ENCODE measurements at regions of chr21 and their contacts with region 1.

Region 1: DNA sequence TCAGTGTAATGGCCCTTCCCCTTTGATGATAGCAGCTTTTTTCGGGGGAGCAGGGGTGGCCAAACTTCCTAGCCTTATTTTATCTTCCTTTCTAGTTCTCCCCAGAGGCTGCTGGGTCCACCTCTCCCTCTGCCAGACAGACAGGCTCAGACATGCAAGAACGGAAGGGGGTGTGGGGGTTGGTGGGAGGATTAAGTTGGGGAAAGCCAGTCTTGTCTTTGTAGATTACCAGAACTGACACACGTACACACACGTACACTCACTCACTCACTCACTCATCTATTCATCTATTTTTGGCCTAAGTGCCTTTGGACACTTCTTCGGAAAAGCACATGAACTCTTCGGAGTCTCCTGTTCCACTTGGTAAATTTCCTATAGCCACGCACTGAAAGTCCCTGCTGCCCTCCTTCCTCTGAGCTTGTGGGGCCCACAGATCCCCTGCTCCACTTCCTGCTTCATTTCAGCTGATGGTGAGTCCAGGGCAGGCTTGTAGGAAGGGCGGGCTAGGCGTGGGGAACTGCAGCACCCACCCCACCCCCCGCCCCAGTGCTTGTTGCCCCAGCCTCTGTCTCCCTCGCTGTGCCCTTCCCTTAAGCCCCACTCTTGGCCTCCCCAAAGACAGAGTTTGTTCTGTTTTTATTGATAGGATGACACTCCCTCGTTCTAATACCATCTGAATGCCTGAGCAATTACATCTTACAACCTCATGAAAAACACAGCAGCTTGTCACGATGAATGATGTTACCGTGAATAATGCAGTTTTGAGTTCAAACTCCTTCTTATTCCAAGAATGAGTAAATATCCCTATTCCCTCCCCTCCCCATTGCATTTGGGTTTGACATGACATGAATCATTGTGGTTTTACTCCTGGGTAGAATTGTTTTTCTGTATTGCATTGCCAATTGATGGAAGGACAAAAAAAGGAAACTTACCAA is 60.7 kb upstream of the ATP5PO start:
- DNase-seq: peak; percentile 58
- H3K4me3 Mint-ChIP-seq: peak overlapping the region; percentile 62
- H3K27ac Mint-ChIP-seq: peak overlapping the region; percentile 94
- H3K4me1 Mint-ChIP-seq: peaks cover 81% of the 10 kb centered on the region
- H3K27me3 Mint-ChIP-seq: no peaks in the 10 kb centered on the region

Region 2: GRCh38 chr21:33761441-33762036 is 214.8 kb before region 1 on chr21:
- CTCF ChIA-PET with region 1: no interaction called
- POLR2A ChIA-PET with region 1: no interaction called
- DNase-seq: no peak
- H3K4me3 Mint-ChIP-seq: no peak overlapping the region
- H3K27ac Mint-ChIP-seq: no peak overlapping the region
- H3K4me1 Mint-ChIP-seq: no peaks in the 10 kb centered on the region
- H3K27me3 Mint-ChIP-seq: no peaks in the 10 kb centered on the region

Region 3: DNA sequence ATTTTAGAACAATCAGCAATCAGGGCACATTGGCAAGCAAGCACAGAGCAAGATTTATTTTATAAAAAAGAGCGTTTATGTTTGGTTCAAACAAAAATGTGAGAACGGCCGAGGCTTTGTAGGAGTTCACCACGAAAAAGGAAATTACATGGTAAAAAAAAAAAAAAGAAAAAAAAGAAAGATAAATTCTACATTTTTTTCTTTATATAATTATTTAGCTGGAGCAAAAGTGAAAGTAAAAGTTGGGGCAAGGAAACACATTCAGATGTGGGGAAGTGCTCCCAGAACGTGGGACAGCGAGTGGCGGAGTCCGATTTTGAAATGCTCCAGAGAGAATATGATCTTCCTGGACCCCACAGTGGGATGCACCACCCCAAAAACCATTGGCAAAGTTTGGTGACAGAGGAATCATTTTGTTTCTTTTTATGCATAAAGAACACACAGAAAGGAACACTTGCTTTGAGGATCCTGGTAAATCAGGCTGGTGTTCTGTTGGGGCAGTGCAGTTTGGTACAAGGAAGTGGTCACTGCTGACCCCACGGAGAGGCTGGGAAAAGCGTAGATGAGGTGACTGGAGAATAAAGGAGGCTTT is 44.5 kb before region 1 on chr21:
- CTCF ChIA-PET with region 1: interaction called, 3 read pairs
- POLR2A ChIA-PET with region 1: interaction called, 63 read pairs
- DNase-seq: no peak
- H3K4me3 Mint-ChIP-seq: peak overlapping the region; percentile 94
- H3K27ac Mint-ChIP-seq: peak overlapping the region; percentile 97
- H3K4me1 Mint-ChIP-seq: peaks cover 48% of the 10 kb centered on the region
- H3K27me3 Mint-ChIP-seq: no peaks in the 10 kb centered on the region

Region 4: GRCh38 chr21:33940164-33940880 is 36.0 kb before region 1 on chr21:
- CTCF ChIA-PET with region 1: no interaction called
- POLR2A ChIA-PET with region 1: interaction called, 63 read pairs
- DNase-seq: no peak
- H3K4me3 Mint-ChIP-seq: no peak overlapping the region
- H3K27ac Mint-ChIP-seq: peak overlapping the region; percentile 34
- H3K4me1 Mint-ChIP-seq: peaks cover 66% of the 10 kb centered on the region
- H3K27me3 Mint-ChIP-seq: no peaks in the 10 kb centered on the region

Region 5: DNA sequence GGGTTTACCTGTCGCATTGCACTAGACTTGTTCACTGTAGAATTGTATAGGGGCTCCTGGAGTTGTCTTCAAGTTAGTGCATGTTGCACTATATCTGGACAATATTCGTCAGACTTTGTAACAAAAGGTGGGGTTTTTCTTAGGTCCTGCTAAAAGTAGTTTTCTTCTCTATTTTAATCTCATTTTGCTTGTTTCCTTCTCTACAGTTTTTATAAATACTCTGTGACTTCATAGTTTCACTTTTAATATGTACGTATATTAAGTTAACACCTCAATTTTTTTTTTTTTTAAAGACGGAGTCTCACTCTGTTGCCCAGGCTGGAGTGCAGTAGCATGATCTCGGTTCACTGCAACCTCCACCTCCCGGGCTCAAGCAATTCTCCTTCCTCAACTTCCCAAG is 70.6 kb after region 1 on chr21:
- CTCF ChIA-PET with region 1: no interaction called
- POLR2A ChIA-PET with region 1: no interaction called
- DNase-seq: no peak
- H3K4me3 Mint-ChIP-seq: no peak overlapping the region
- H3K27ac Mint-ChIP-seq: no peak overlapping the region
- H3K4me1 Mint-ChIP-seq: peaks cover 8% of the 10 kb centered on the region
- H3K27me3 Mint-ChIP-seq: peaks cover 5% of the 10 kb centered on the region